Right cardiac atrium (tissue), 5 donors: ENCODE measurements at regions of chr3 and their contacts with region 1.

Region 1: GRCh38 chr3:20739814-20740213 is 553.8 kb upstream of the SGO1 start:
- DNase-seq: no peak
- ATAC-seq: no peak
- H3K4me3 ChIP-seq: no peak overlapping the region
- H3K27ac ChIP-seq: no peak overlapping the region
- H3K4me1 ChIP-seq: no peaks in the 10 kb centered on the region
- H3K27me3 ChIP-seq: no peaks in the 10 kb centered on the region

Region 2: GRCh38 chr3:20511863-20512505 is 227.8 kb before region 1 on chr3:
- intact Hi-C with region 1: loop called in 2 of 4 experiments (anchors 5 to 10 kb)
- DNase-seq: no peak
- ATAC-seq: peak; percentile 59 to 80
- H3K4me3 ChIP-seq: no peak overlapping the region
- H3K27ac ChIP-seq: no peak overlapping the region
- H3K4me1 ChIP-seq: peaks cover 4% of the 10 kb centered on the region
- H3K27me3 ChIP-seq: no peaks in the 10 kb centered on the region